BJ (cell line): ENCODE measurements at regions of chr19 and their contacts with region 1.

Region 1: GRCh38 chr19:8005534-8006256 is at the start of gene ELAVL1:
- DNase-seq: no peak
- H3K4me3 ChIP-seq: peak within 1 kb of the TSS; percentile 98
- H3K27me3 ChIP-seq: no peaks in the 10 kb centered on the region
- CTCF ChIP-seq: no peak
- polyA plus RNA-seq, gene ELAVL1: 39.9 and 41.2 TPM in 2 replicates

Region 2: GRCh38 chr19:7715671-7716070 is 290.0 kb before region 1 on chr19:
- CTCF ChIA-PET with region 1: no interaction called
- POLR2A ChIA-PET with region 1: no interaction called
- DNase-seq: no peak
- H3K4me3 ChIP-seq: no peak overlapping the region
- H3K27me3 ChIP-seq: no peaks in the 10 kb centered on the region
- CTCF ChIP-seq: no peak

Region 3: DNA sequence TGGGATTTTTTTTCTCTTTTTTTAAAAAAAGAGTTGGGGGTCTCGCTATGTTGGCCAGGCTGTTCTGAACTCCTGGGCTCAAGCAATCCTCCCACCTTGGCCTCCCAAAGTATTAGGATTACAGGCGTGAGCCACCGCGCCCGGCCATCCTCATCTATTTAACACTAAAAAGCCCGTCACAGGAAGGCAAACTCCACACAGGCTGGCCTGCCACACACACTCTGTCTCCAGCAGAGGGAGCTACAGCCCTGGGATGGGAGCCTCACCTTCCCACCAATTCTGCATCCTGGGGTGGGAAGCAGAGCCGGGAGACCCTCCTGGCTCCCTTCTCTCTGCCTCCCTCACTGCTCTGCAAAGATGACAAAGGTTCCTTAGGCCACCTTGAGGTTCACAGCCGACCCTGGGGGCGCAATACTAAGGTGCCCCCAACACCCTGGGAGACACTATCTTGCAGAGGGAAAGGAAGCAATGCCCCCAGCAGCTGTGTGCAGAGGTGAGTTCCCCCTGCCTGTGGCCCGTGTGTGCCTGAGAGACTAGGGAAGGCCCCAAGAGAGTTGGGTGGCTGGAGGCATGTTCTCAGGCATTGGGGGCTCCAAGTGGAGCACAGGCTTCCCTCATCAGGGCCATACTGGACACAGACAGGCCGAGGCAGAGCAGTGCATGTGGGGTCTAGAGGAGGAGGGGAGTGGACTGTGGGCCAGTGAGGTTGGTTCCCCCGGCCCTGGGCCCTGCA is 34.8 kb before region 1 on chr19:
- CTCF ChIA-PET with region 1: interaction called, 98 read pairs
- POLR2A ChIA-PET with region 1: no interaction called
- DNase-seq: no peak
- H3K4me3 ChIP-seq: no peak overlapping the region
- H3K27me3 ChIP-seq: no peaks in the 10 kb centered on the region
- CTCF ChIP-seq: peak; percentile 83

Region 4: DNA sequence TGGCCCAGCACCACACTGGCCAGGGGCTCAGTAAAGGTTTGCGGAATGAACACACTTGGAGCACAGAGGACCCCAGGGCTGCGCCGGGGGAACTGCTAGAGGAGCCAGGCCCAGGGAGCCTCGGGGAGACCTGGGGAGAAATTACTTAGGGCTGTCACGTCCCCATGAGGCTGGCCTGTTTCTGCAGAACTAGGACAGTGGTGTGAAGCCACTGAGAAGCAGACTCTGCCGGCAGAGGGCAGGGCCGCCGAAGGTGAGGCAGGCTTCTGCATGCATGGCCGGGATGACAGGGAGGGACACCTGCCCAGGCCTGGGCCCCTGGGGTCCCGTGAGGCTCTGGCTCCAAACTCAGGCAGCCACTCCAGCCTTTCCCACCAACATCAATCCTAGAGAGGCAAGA is 26.7 kb before region 1 on chr19:
- CTCF ChIA-PET with region 1: interaction called, 98 read pairs
- POLR2A ChIA-PET with region 1: no interaction called
- DNase-seq: no peak
- H3K4me3 ChIP-seq: no peak overlapping the region
- H3K27me3 ChIP-seq: no peaks in the 10 kb centered on the region
- CTCF ChIP-seq: no peak

Region 5: DNA sequence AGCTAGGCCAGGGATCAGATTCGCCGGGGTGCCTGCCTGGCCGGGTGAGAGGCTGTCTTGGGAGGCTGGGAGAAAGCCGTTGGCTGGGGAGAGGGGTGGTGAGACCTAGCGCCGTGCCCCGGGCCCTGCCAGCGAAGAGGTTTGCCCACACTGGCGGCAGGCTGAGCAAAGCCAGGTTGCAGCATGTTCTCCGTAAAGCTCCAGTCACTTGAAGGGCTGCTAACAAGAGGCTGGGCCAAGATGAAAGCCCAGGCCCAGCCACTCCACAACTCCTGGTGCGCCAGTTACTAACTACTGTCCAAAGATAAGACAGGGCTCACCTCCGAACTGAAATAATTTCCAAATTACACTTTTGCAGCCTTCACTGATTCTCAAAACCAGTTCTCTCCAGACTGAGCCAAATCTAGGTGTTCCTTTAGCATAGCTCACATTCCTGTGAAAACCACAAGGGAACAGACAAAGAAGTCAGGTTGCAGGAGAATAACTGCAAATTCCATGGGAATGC is 16.6 kb before region 1 on chr19:
- CTCF ChIA-PET with region 1: interaction called, 31 read pairs
- POLR2A ChIA-PET with region 1: interaction called, 7 read pairs
- DNase-seq: no peak
- H3K4me3 ChIP-seq: no peak overlapping the region
- H3K27me3 ChIP-seq: no peaks in the 10 kb centered on the region
- CTCF ChIP-seq: no peak

Region 6: DNA sequence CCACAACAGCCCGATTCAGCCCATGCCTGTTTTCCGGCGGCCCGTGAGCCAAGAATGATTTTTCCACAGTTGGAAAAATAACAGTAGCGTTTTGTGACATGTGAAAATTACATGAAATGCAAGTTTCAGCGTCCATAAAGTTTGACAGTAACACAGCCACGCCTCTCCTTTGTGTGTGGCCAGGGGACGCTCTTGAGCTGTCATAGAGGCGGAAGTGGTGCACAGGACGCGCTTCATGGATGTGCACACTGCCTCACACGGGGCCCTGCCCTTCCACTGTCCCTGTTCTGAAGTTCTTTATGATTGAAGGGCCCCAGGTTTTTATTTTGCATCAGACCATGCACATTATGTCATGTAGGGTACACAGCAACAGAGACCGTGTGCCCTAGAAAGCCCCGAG is 12.1 kb after region 1 on chr19:
- CTCF ChIA-PET with region 1: interaction called, 11 read pairs
- POLR2A ChIA-PET with region 1: no interaction called
- DNase-seq: no peak
- H3K4me3 ChIP-seq: no peak overlapping the region
- H3K27me3 ChIP-seq: no peaks in the 10 kb centered on the region
- CTCF ChIP-seq: no peak

Region 7: DNA sequence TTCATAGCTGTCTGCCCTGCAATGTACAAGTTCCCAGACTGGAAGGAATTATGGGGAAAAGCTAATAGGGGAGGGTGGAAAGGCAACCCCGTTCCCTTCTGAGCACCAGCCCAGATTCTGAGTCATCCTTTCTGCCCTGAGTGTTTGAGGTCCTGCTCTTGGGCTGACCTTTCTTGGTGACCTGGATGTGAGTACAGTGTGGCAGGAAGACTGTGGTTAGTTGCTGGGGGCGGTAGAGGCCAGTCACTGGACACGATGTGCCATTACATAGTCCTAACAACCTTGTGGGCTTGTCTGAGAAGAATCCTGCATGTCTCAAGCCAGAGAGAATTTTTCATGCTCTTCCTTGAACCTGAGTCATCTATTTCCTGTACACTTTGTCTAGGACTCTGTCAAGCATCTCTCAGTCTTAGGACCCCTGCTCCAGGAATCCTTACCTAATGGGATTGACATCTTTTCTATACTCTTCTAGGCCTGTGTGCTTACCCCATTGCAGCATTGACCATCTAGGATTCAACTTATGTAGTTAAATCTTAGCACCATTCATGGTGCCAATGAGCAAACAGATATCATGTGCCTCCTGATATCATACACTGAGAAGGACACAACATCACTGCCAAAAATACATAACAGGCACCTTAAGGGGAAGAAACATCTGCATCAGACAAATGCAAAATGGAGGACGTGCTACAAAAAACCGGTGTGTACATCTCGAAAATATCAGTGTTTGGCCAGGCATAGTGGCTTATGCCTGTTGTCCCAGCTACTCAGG is 350.1 kb after region 1 on chr19:
- CTCF ChIA-PET with region 1: no interaction called
- POLR2A ChIA-PET with region 1: no interaction called
- DNase-seq: peak; percentile 95
- H3K4me3 ChIP-seq: no peak overlapping the region
- H3K27me3 ChIP-seq: no peaks in the 10 kb centered on the region; the same call in 1 of the 2 replicates
- CTCF ChIP-seq: no peak